WTC11 (cell line): ENCODE measurements at regions of chr16 and their contacts with region 1.

Region 1: DNA sequence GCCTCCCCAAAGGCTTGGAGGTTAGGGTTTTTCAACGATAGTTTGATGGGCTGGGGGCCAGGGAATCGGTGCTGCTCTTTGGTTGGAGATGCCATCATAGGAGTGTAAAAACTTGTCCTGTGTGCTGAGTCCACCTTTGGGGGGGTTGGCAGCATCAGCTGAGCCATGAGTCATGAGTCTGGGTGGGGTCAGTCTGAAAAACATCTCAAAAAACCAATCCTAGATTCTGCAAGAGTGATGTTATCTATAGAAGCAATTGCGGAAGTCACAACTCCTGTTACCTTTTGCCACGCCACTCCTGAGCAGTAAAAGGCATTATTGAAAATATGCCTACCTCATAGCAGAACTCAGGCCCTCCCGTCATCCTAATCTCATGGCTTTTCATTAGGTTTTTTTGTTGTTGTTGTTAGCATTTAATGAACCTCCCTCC is 2.5 kb upstream of the PRSS41 start:
- DNase-seq: no peak
- ATAC-seq: no peak
- H3K4me3 Mint-ChIP-seq: no peak overlapping the region
- H3K27ac Mint-ChIP-seq: no peak overlapping the region
- H3K4me1 Mint-ChIP-seq: no peaks in the 10 kb centered on the region
- H3K27me3 Mint-ChIP-seq: peaks cover 15% of the 10 kb centered on the region; the same call in 1 of the 2 replicates
- CTCF ChIP-seq: no peak

Region 2: GRCh38 chr16:2656985-2657384 is 138.7 kb before region 1 on chr16:
- CTCF ChIA-PET with region 1: no interaction called
- POLR2A ChIA-PET with region 1: no interaction called
- DNase-seq: no peak
- ATAC-seq: no peak
- H3K4me3 Mint-ChIP-seq: no peak overlapping the region
- H3K27ac Mint-ChIP-seq: no peak overlapping the region
- H3K4me1 Mint-ChIP-seq: no peaks in the 10 kb centered on the region
- H3K27me3 Mint-ChIP-seq: peaks cover 14% of the 10 kb centered on the region
- CTCF ChIP-seq: no peak

Region 3: DNA sequence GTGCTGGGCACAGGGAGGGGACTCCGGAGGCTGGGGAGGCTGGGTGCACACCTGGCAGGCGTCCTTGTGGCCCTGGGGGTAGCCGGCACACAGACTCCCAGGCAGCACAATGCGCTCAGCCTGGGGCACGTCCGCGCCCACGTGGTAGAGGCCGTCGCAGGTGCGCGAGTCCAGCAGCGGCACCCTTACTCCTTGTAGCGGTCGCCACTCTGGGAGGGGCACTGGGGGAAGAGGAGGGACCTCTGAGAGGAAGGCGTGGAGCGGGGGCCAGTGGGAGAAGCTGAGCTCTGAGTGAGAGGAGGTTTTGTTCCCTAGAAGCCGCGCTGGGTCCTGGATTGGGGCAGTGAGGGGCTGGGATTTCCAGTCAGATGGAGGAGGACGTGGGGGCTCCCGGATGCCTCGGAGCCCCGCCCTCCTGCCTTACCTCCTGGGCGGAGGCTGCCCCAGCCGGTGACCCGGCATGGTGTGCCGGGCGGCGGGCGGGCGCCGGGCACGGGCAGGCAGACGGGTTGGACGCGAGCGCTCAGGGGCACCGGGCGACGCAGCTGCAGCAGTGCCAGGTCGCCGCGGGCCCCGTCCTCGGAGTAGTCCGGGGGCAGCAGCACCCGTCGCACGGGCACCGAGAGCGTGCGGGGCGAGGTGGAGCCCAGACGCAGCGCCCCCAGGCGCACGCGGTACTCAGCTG is 10.6 kb before region 1 on chr16:
- CTCF ChIA-PET with region 1: interaction called, 18 read pairs
- POLR2A ChIA-PET with region 1: no interaction called
- DNase-seq: no peak
- ATAC-seq: peak; percentile 24
- H3K4me3 Mint-ChIP-seq: peak overlapping the region; percentile 69
- H3K27ac Mint-ChIP-seq: no peak overlapping the region
- H3K4me1 Mint-ChIP-seq: peaks cover 8% of the 10 kb centered on the region
- H3K27me3 Mint-ChIP-seq: peaks cover 35% of the 10 kb centered on the region
- CTCF ChIP-seq: no peak

Region 4: GRCh38 chr16:2808181-2808580 is 12.5 kb after region 1 on chr16:
- CTCF ChIA-PET with region 1: interaction called, 29 read pairs
- POLR2A ChIA-PET with region 1: no interaction called
- DNase-seq: no peak
- ATAC-seq: no peak
- H3K4me3 Mint-ChIP-seq: no peak overlapping the region
- H3K27ac Mint-ChIP-seq: no peak overlapping the region
- H3K4me1 Mint-ChIP-seq: no peaks in the 10 kb centered on the region
- H3K27me3 Mint-ChIP-seq: peaks cover 28% of the 10 kb centered on the region
- CTCF ChIP-seq: no peak

Region 5: GRCh38 chr16:2816751-2817339 is 21.1 kb after region 1 on chr16 and contains the start of gene PRSS21:
- CTCF ChIA-PET with region 1: interaction called, 29 read pairs
- POLR2A ChIA-PET with region 1: no interaction called
- DNase-seq: peak; percentile 67
- ATAC-seq: peak; percentile 83
- H3K4me3 Mint-ChIP-seq: no peak within 1 kb of the TSS
- H3K27ac Mint-ChIP-seq: no peak within 1 kb of the TSS
- H3K4me1 Mint-ChIP-seq: no peaks in the 10 kb centered on the region
- H3K27me3 Mint-ChIP-seq: no peaks in the 10 kb centered on the region
- CTCF ChIP-seq: peak; percentile 68
- total RNA-seq, gene PRSS21: 1.2 to 1.5 TPM (median 1.4 TPM) in 3 replicates